GM12878 (cell line): ENCODE measurements at regions of chr3 and their contacts with region 1.

Region 1: GRCh38 chr3:171801738-171802600 is 8.3 kb downstream of the PLD1 start:
- DNase-seq: peak; percentile 70
- ATAC-seq: peak; percentile 25
- H3K4me3 ChIP-seq: no peak overlapping the region
- H3K27ac ChIP-seq: peak overlapping the region; percentile 77
- H3K4me1 ChIP-seq: peaks cover 8% of the 10 kb centered on the region; the same call in 1 of the 2 replicates
- H3K27me3 ChIP-seq: no peaks in the 10 kb centered on the region
- CTCF ChIP-seq: no peak
- EP300 ChIP-seq: peak; percentile 59 to 78; a peak in 2 of 4 replicates
- POLR2A ChIP-seq: no peak
- RAD21 ChIP-seq: no peak

Region 2: DNA sequence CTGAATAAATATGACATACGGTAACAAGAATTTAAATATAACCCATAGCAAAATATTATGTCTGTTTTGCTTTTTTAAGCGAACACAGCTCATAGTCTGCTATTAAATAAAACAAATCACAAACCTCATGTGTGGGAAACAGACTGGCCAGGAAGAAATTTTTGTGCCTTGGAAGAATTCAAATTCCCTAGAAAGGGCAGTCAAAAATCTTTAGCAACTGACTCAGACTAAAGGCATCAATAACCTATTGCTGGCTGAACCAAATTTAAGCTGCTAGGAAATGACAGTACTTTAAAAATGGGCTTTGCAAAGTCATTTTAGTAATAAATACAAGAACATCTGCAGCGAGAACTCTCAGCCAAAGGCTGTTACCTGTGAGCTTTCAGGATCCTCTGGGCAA is 143.1 kb before region 1 on chr3:
- CTCF ChIA-PET with region 1: no interaction called
- POLR2A ChIA-PET with region 1: no interaction called
- RAD21 ChIA-PET with region 1: no interaction called
- SMC1A ChIA-PET with region 1: no interaction called
- in situ Hi-C with region 1: no loop called
- intact Hi-C with region 1: no loop called
- DNase-seq: no peak
- ATAC-seq: no peak
- H3K4me3 ChIP-seq: no peak overlapping the region
- H3K27ac ChIP-seq: no peak overlapping the region
- H3K4me1 ChIP-seq: peaks cover 7% of the 10 kb centered on the region
- H3K27me3 ChIP-seq: no peaks in the 10 kb centered on the region
- CTCF ChIP-seq: no peak
- EP300 ChIP-seq: no peak
- POLR2A ChIP-seq: no peak
- RAD21 ChIP-seq: no peak

Region 3: DNA sequence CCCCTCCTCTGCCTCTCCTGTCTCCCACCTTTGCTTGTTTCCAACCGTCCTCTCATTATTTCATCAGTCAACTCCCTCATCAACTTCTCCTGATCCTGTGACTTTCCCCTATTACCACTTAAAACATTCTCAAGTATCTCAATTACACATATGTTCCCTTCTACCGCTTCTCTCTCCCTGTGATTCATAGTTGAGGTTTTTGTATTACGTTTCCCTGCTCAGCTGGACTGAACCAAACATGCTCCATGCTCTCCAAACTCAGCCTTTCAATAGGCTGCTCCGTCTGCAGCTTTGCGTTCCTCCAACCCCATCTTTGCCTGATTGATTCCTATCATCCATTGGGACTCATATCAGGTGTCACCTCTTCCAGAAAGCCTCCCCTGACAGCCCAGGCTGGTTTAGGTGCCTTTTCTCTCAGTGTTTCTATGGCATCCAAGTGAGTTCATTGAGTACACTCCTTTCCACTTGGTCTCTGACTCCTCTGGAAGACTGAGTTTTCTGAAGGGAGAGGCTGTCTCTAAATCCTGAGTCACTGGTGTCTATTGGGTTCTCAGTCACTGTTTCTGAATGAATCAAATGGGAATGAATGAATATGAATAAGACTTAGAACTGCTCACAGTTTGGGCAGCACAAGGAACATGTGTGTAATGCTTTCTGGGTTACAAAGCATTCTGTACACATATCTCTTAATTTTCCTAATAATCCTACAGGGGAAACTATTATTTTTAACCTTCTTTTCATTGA is 48.1 kb before region 1 on chr3:
- CTCF ChIA-PET with region 1: no interaction called
- POLR2A ChIA-PET with region 1: interaction called, 5 read pairs
- RAD21 ChIA-PET with region 1: interaction called, 8 read pairs
- SMC1A ChIA-PET with region 1: interaction called, 18 read pairs
- in situ Hi-C with region 1: no loop called
- intact Hi-C with region 1: no loop called
- DNase-seq: no peak
- ATAC-seq: peak; percentile 13; the same call in 2 of the 3 replicates
- H3K4me3 ChIP-seq: no peak overlapping the region
- H3K27ac ChIP-seq: no peak overlapping the region; the same call in 1 of the 2 replicates
- H3K4me1 ChIP-seq: no peaks in the 10 kb centered on the region; the same call in 1 of the 2 replicates
- H3K27me3 ChIP-seq: peaks cover 0 to 3% of the 10 kb centered on the region in 2 experiments; a peak in 1 of 4 replicates
- CTCF ChIP-seq: no peak
- EP300 ChIP-seq: no peak
- POLR2A ChIP-seq: no peak
- RAD21 ChIP-seq: no peak

Region 4: GRCh38 chr3:171781711-171782127 is 20.2 kb before region 1 on chr3:
- CTCF ChIA-PET with region 1: interaction called, 5 read pairs
- POLR2A ChIA-PET with region 1: interaction called, 13 read pairs
- RAD21 ChIA-PET with region 1: interaction called, 12 read pairs
- SMC1A ChIA-PET with region 1: interaction called, 17 read pairs
- in situ Hi-C with region 1: no loop called
- intact Hi-C with region 1: loop called (anchors 2 kb)
- DNase-seq: no peak
- ATAC-seq: no peak
- H3K4me3 ChIP-seq: no peak overlapping the region
- H3K27ac ChIP-seq: no peak overlapping the region
- H3K4me1 ChIP-seq: no peaks in the 10 kb centered on the region
- H3K27me3 ChIP-seq: no peaks in the 10 kb centered on the region
- CTCF ChIP-seq: no peak
- EP300 ChIP-seq: no peak
- POLR2A ChIP-seq: no peak
- RAD21 ChIP-seq: no peak

Region 5: GRCh38 chr3:171788546-171789351 is 13.2 kb before region 1 on chr3:
- CTCF ChIA-PET with region 1: interaction called, 8 read pairs
- POLR2A ChIA-PET with region 1: interaction called, 53 read pairs
- RAD21 ChIA-PET with region 1: interaction called, 18 read pairs
- SMC1A ChIA-PET with region 1: interaction called, 45 read pairs
- in situ Hi-C with region 1: no loop called
- intact Hi-C with region 1: no loop called
- DNase-seq: no peak
- ATAC-seq: peak; percentile 10
- H3K4me3 ChIP-seq: no peak overlapping the region
- H3K27ac ChIP-seq: no peak overlapping the region
- H3K4me1 ChIP-seq: no peaks in the 10 kb centered on the region; the same call in 1 of the 2 replicates
- H3K27me3 ChIP-seq: no peaks in the 10 kb centered on the region
- CTCF ChIP-seq: peak in 1 of 3 experiments; percentile 18; a peak in 1 of 6 replicates
- EP300 ChIP-seq: peak; percentile 69 to 92; a peak in 3 of 4 replicates
- POLR2A ChIP-seq: no peak
- RAD21 ChIP-seq: no peak

Region 6: DNA sequence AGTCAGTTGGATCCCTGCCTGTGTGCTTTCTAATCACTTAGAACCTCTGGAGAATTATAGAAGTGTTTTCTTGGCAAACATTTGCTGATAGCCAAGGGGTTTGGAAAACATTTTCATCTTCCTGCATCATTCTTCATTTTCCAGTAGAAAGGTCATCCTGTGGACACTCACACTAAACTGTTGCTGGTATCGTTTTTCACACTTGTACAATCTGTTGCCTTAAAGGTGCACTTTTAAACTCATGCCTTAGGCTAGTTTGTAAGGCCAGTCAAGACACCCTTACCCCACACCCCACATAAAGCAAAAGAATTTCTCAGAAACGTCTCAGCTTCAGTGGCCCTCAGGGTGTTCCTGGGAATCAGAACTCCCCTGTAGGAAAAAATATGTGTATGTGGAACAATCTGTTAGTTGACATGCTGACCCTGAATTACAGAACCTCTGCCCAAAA is 14.1 kb after region 1 on chr3:
- CTCF ChIA-PET with region 1: interaction called, 16 read pairs
- POLR2A ChIA-PET with region 1: interaction called, 40 read pairs
- RAD21 ChIA-PET with region 1: interaction called, 117 read pairs
- SMC1A ChIA-PET with region 1: interaction called, 40 read pairs
- in situ Hi-C with region 1: no loop called
- intact Hi-C with region 1: loop called (anchors 1 kb)
- DNase-seq: no peak
- ATAC-seq: no peak
- H3K4me3 ChIP-seq: no peak overlapping the region
- H3K27ac ChIP-seq: no peak overlapping the region
- H3K4me1 ChIP-seq: no peaks in the 10 kb centered on the region
- H3K27me3 ChIP-seq: no peaks in the 10 kb centered on the region; a peak in 1 of 4 replicates
- CTCF ChIP-seq: no peak
- EP300 ChIP-seq: no peak
- POLR2A ChIP-seq: no peak
- RAD21 ChIP-seq: no peak

Region 7: GRCh38 chr3:171822431-171823106 is 20.6 kb after region 1 on chr3:
- CTCF ChIA-PET with region 1: interaction called, 76 read pairs
- POLR2A ChIA-PET with region 1: interaction called, 19 read pairs
- RAD21 ChIA-PET with region 1: interaction called, 117 read pairs
- SMC1A ChIA-PET with region 1: interaction called, 151 read pairs
- in situ Hi-C with region 1: no loop called
- intact Hi-C with region 1: no loop called
- DNase-seq: no peak
- ATAC-seq: peak; percentile 88
- H3K4me3 ChIP-seq: no peak overlapping the region
- H3K27ac ChIP-seq: no peak overlapping the region
- H3K4me1 ChIP-seq: no peaks in the 10 kb centered on the region
- H3K27me3 ChIP-seq: no peaks in the 10 kb centered on the region; a peak in 1 of 4 replicates
- CTCF ChIP-seq: no peak
- EP300 ChIP-seq: no peak
- POLR2A ChIP-seq: no peak
- RAD21 ChIP-seq: no peak